B cell (primary cell): ENCODE measurements at regions of chr11 and their contacts with region 1.

Region 1: GRCh38 chr11:64317957-64318693 is at the start of gene PRDX5:
- DNase-seq: peak; percentile 98
- ATAC-seq: peak; percentile 79
- H3K4me3 ChIP-seq: peak within 1 kb of the TSS; percentile 76 to 95 (median 81)
- H3K4me3 Mint-ChIP-seq: peak within 1 kb of the TSS; percentile 98
- H3K27ac ChIP-seq: peak within 1 kb of the TSS; percentile 99 to 100
- H3K27ac Mint-ChIP-seq: peak within 1 kb of the TSS; percentile 100
- H3K4me1 ChIP-seq: peaks cover 8 to 26% of the 10 kb centered on the region in 2 donors
- H3K4me1 Mint-ChIP-seq: peaks cover 32% of the 10 kb centered on the region
- H3K27me3 ChIP-seq: no peaks in the 10 kb centered on the region
- H3K27me3 Mint-ChIP-seq: no peaks in the 10 kb centered on the region
- CTCF ChIP-seq: peak; percentile 39
- total RNA-seq, gene PRDX5: 50.4 and 56.3 TPM in 2 replicates

Region 2: DNA sequence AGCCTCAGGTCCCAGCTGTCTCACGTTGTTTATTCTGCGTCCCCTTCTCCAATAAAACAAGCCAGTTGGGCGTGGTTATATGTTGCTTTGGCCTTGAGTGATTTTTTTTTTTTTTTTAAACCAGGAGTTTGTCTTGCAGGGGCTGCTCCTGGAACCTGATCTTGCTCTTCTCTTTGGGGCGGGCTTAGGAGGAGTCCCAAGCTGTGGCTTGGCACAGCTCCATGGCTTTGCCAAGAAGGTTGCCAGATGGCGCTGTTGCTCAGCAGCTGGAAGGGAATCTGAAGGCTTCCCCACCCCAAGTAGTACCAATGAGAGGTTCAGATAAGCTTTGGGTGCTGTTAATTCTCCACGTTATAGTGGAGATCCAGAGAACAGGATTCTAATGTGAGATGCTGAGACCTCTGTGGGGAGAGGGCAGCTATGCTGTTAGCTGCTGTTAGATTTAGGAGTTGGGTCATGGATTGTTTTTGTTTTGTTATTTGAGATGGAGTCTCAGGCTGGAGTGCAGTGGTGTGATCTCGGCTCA is 113.6 kb before region 1 on chr11:
- CTCF ChIA-PET with region 1: interaction called, 15 read pairs
- POLR2A ChIA-PET with region 1: interaction called, 11 read pairs
- intact Hi-C with region 1: no loop called
- DNase-seq: peak; percentile 89
- ATAC-seq: peak; percentile 48
- H3K4me3 ChIP-seq: no peak overlapping the region
- H3K4me3 Mint-ChIP-seq: peak overlapping the region; percentile 80
- H3K27ac ChIP-seq: peak overlapping the region in 1 of 2 donors; percentile 35
- H3K27ac Mint-ChIP-seq: peak overlapping the region; percentile 95
- H3K4me1 ChIP-seq: peaks cover 30 to 45% of the 10 kb centered on the region in 2 donors
- H3K4me1 Mint-ChIP-seq: peaks cover 44% of the 10 kb centered on the region
- H3K27me3 ChIP-seq: no peaks in the 10 kb centered on the region
- H3K27me3 Mint-ChIP-seq: no peaks in the 10 kb centered on the region
- CTCF ChIP-seq: peak; percentile 75

Region 3: DNA sequence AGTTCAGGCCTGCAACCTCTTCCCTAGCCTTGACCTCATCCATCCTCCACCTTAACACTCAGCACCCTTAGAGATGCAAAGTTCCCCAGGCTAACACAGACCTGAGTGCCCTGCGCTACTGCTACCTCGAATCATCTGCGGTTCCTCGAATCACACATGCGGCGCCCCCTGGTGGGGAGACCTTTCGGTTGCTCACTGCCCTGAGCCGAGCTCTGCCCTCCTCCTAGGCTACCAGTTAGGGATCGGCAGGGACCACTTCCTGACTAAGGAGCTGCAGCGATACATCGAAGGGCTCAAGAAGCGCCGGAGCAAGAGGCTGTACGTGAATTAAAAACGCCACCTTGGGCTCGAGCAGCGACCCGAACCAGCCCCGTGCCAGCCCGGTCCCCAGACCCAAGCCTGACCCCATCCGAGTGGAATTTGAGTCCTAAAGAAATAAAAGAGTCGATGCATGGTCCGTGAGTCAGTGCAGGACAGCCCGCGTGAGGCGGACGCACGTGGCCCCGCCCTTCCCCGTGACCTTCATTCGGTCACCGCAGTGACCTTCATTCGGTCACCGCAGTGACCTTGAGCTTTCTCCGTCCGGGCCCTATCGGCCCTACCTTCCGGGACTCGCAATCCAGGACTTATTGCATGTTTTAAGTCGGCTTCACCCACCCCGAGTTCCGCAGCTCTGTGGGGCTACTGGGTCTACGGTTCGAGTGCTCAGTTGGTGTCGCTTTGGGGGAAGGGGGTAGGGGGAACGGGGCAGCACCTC is 13.6 kb before region 1 on chr11:
- CTCF ChIA-PET with region 1: interaction called, 52 read pairs
- POLR2A ChIA-PET with region 1: interaction called, 20 read pairs
- intact Hi-C with region 1: loop called (anchors 1 kb)
- DNase-seq: peak; percentile 92
- ATAC-seq: peak; percentile 13
- H3K4me3 ChIP-seq: peak overlapping the region; percentile 78 to 88 (median 85)
- H3K4me3 Mint-ChIP-seq: peak overlapping the region; percentile 90
- H3K27ac ChIP-seq: peak overlapping the region; percentile 93 to 94
- H3K27ac Mint-ChIP-seq: peak overlapping the region; percentile 89
- H3K4me1 ChIP-seq: peaks cover 26 to 47% of the 10 kb centered on the region in 2 donors
- H3K4me1 Mint-ChIP-seq: peaks cover 36% of the 10 kb centered on the region
- H3K27me3 ChIP-seq: peaks cover 0 to 32% (median 13%) of the 10 kb centered on the region in 4 experiments
- H3K27me3 Mint-ChIP-seq: peaks cover 13% of the 10 kb centered on the region
- CTCF ChIP-seq: peak; percentile 89

Region 4: DNA sequence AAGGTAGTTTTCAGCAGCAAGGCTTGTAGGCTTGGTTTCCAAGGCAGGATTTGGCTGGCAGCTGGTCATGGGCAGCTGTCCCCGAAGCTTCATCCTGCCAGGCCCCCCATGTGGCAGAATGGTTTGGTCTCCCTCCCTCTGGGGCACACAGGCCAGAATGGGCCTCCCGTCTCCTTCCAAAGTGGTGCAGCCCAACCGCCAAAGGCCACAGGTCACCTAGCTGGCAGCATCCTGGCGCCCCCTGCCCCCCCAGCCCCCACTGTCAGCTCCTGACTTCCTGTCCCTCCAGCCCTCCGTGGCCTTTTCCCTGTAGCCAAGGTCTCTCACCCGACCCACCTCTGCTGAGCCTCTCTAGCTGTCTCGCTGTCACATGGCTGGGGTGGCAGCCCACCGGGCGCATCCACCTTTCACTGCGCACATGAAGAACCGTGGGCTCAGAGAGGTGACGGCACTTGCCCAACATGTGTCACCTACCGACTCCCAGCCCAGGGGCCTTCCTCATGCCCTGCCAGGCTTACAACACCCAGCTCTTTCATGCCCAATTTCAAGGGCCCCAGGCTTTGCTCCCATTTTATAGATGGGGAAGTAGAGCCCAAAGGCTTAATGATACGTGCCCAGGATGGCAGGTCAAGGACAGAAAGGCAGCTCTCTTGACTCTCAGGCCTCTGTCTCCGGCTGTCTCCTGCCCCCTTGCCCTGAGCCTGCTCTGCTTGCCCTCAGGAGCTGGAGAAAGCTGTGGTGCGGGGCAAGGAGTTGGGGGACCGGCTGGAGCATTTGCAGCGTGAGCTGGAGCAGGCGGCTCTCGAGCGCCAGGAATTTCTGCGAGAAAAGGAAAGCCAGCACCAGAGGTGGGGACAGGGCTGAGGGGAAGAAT is 30.7 kb after region 1 on chr11:
- CTCF ChIA-PET with region 1: interaction called, 188 read pairs
- POLR2A ChIA-PET with region 1: interaction called, 16 read pairs
- intact Hi-C with region 1: no loop called
- DNase-seq: no peak
- ATAC-seq: no peak
- H3K4me3 ChIP-seq: no peak overlapping the region
- H3K4me3 Mint-ChIP-seq: no peak overlapping the region
- H3K27ac ChIP-seq: no peak overlapping the region
- H3K27ac Mint-ChIP-seq: no peak overlapping the region
- H3K4me1 ChIP-seq: no peaks in the 10 kb centered on the region
- H3K4me1 Mint-ChIP-seq: peaks cover 3% of the 10 kb centered on the region
- H3K27me3 ChIP-seq: no peaks in the 10 kb centered on the region
- H3K27me3 Mint-ChIP-seq: no peaks in the 10 kb centered on the region
- CTCF ChIP-seq: no peak

Region 5: DNA sequence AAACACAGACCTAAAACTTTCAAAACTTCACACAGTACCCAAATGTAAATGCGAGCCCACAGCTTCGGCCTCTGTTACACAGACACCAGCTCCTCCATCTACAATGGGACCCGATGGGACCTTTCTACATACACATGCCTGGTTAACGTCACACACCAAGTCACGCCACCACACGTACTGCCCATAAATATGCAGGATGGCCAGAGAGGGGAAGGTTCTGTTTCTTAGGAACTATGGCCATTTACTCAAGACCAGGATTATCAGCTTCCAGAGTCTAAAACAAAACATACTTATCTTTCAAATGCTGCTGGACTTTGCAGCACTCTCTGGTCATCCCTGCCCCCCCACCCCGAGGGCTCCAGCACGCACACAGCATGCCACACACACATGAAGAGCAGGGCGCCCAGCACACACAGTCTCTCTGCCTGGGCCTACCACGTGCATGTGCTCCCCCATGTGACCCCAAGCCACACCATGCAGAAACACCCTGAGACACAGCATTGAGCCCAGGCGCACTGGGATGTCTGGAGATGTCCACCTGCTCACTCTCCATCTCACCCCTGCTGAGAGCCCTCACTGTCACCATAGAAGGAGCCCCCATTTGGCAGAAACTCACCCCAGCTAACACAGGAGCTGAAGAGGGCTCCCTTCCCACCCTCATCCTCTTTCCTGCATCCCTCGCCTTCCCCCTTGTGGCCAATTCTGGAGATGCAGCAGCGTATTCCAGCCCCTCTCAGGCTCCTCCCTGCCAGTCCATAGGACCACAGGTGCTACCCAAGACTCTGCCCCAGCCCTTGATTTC is 334.7 kb after region 1 on chr11:
- CTCF ChIA-PET with region 1: interaction called, 15 read pairs
- POLR2A ChIA-PET with region 1: no interaction called
- intact Hi-C with region 1: loop called (anchors 1 kb)
- DNase-seq: peak; percentile 78
- ATAC-seq: peak; percentile 51
- H3K4me3 ChIP-seq: no peak overlapping the region
- H3K4me3 Mint-ChIP-seq: no peak overlapping the region
- H3K27ac ChIP-seq: no peak overlapping the region
- H3K27ac Mint-ChIP-seq: no peak overlapping the region
- H3K4me1 ChIP-seq: peaks cover 17 to 33% of the 10 kb centered on the region in 2 donors
- H3K4me1 Mint-ChIP-seq: peaks cover 28% of the 10 kb centered on the region
- H3K27me3 ChIP-seq: peaks cover 0 to 4% (median 0%) of the 10 kb centered on the region in 4 experiments
- H3K27me3 Mint-ChIP-seq: peaks cover 3% of the 10 kb centered on the region
- CTCF ChIP-seq: peak; percentile 70

Region 6: DNA sequence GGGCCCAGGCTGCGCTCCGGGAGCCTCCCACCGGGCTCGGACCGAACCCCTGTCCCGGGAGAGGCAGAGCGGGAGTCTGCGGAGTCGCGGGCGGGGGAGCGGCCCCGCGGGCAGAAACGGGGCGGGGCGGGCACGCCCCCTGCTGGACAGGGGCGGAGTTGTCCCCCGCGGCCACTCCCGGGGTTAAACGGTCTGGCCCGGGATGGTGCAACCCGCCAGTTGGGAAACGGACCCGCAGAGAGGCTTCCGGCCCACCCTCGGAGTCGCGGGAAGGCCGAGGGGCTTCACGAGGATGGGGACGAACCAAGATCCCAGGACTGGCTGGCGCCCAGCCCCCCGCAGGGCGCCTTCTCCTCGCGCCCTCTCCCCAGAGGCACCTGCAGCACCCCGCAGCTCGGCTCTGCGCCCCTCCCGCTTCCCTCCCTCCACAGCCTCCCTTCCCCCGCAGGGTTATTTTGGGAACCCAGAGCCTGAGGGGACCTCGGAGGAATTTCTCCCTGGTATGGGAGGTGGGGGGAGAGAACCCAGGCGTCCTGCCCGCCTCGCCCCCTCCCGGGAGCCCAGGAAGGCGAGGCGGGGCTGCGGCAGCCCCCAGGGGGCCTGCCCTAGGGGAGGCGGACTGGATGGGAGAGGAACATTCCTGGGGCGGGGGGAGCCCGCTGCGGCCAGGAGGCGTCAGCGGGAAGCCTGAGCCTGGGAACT is 424.9 kb after region 1 on chr11:
- CTCF ChIA-PET with region 1: no interaction called
- POLR2A ChIA-PET with region 1: interaction called, 3 read pairs
- intact Hi-C with region 1: loop called (anchors 5 kb)
- DNase-seq: peak; percentile 88
- ATAC-seq: peak; percentile 11
- H3K4me3 ChIP-seq: peak overlapping the region; percentile 48 to 99 (median 86)
- H3K4me3 Mint-ChIP-seq: peak overlapping the region; percentile 97
- H3K27ac ChIP-seq: peak overlapping the region; percentile 84 to 91
- H3K27ac Mint-ChIP-seq: peak overlapping the region; percentile 86
- H3K4me1 ChIP-seq: peaks cover 22 to 33% of the 10 kb centered on the region in 2 donors
- H3K4me1 Mint-ChIP-seq: peaks cover 49% of the 10 kb centered on the region
- H3K27me3 ChIP-seq: no peaks in the 10 kb centered on the region
- H3K27me3 Mint-ChIP-seq: no peaks in the 10 kb centered on the region
- CTCF ChIP-seq: peak; percentile 86